ENCODE measurements at regions of chr7 and their contacts with region 1.

Region 1: GRCh38 chr7:112449902-112450806 is at the start of gene IFRD1:
- DNase-seq: peak; percentile 98
- H3K4me3 Mint-ChIP-seq: peak within 1 kb of the TSS; percentile 99
- H3K27ac Mint-ChIP-seq: peak within 1 kb of the TSS; percentile 99
- H3K4me1 Mint-ChIP-seq: peaks cover 39% of the 10 kb centered on the region
- H3K27me3 Mint-ChIP-seq: no peaks in the 10 kb centered on the region
- total RNA-seq, gene IFRD1: 47.3 to 50.5 TPM

Region 2: GRCh38 chr7:111561885-111562732 is 888.0 kb before region 1 on chr7 and contains the start of gene IMMP2L:
- CTCF ChIA-PET with region 1: no interaction called
- intact Hi-C with region 1: loop called (anchors 1 kb)
- DNase-seq: peak; percentile 89
- H3K4me3 Mint-ChIP-seq: peak within 1 kb of the TSS; percentile 89
- H3K27ac Mint-ChIP-seq: peak within 1 kb of the TSS; percentile 85
- H3K4me1 Mint-ChIP-seq: peaks cover 32% of the 10 kb centered on the region
- H3K27me3 Mint-ChIP-seq: no peaks in the 10 kb centered on the region
- total RNA-seq, gene IMMP2L: 24.4 to 26.6 TPM

Region 3: DNA sequence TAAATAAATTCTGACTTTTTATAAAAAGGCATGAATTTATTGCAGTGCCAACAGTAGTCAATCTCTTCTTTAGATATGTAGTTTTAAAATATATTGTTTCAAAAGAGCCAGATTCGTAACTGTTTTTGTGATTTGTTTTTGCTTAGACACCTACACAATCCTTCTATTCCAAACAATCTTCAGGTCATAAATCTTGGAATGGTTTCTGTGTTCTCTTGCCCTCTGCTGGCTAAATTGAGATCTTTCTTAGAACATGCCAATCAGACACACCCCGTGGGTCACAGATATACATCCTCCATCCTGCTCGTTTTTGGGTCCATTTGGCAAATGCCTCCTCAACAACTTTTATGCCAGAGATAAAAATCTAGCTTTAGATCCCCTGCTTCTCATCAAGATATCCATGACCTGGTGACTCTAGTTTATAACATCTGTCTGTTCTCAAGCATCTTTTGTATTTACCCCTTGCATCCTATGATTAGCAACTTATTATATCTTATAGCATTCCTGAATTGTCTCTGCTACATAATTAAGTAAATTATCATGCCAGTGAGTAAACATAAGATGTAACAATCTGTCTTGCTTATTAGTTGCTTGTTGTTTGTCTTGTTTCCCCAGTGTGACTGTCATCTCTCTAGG is 35.2 kb before region 1 on chr7:
- CTCF ChIA-PET with region 1: no interaction called
- intact Hi-C with region 1: loop called (anchors 2 kb)
- DNase-seq: no peak
- H3K4me3 Mint-ChIP-seq: no peak overlapping the region
- H3K27ac Mint-ChIP-seq: no peak overlapping the region
- H3K4me1 Mint-ChIP-seq: no peaks in the 10 kb centered on the region
- H3K27me3 Mint-ChIP-seq: peaks cover 10% of the 10 kb centered on the region

Region 4: DNA sequence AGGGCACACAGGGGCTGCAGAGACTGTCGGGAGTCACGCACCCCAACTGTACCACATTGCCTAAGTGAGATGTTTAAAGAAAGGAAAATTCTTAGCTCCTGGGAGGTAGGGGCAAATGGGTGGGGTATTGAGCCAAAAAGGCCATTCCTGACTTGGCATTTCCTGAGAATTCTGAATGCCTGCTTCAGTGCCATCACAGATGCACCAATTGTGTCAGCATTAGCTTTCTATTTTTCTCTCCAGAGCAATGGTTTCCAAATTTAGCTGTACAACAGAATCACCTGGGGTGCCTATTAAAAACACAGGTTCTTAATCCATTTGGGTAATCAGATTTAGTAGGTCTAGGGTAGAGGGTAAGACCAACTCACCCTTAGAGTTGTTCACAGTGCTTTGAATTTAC is 73.7 kb after region 1 on chr7:
- CTCF ChIA-PET with region 1: no interaction called
- intact Hi-C with region 1: no loop called
- DNase-seq: no peak
- H3K4me3 Mint-ChIP-seq: no peak overlapping the region
- H3K27ac Mint-ChIP-seq: no peak overlapping the region
- H3K4me1 Mint-ChIP-seq: no peaks in the 10 kb centered on the region
- H3K27me3 Mint-ChIP-seq: peaks cover 25% of the 10 kb centered on the region

Region 5: DNA sequence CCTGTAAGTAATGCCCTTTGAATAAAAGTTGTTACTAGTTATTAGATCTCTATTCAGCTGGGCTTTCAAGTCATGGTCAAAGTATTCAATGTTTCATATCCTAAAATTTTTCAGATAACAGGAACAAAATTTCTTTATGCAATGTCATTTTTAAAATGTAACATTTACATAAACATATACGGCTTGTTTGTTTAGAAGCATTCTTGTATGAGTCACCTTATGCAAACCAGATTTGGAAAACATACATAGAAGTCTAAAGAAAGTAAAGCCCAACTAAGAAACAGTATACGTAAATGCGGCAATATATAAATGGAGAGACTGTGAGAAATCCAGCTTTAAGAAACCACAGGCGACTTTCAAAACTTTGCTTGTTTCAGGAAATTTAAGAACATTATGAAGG is 329.5 kb after region 1 on chr7:
- CTCF ChIA-PET with region 1: no interaction called
- intact Hi-C with region 1: no loop called
- DNase-seq: no peak
- H3K4me3 Mint-ChIP-seq: no peak overlapping the region
- H3K27ac Mint-ChIP-seq: no peak overlapping the region
- H3K4me1 Mint-ChIP-seq: peaks cover 19% of the 10 kb centered on the region
- H3K27me3 Mint-ChIP-seq: no peaks in the 10 kb centered on the region

Region 6: DNA sequence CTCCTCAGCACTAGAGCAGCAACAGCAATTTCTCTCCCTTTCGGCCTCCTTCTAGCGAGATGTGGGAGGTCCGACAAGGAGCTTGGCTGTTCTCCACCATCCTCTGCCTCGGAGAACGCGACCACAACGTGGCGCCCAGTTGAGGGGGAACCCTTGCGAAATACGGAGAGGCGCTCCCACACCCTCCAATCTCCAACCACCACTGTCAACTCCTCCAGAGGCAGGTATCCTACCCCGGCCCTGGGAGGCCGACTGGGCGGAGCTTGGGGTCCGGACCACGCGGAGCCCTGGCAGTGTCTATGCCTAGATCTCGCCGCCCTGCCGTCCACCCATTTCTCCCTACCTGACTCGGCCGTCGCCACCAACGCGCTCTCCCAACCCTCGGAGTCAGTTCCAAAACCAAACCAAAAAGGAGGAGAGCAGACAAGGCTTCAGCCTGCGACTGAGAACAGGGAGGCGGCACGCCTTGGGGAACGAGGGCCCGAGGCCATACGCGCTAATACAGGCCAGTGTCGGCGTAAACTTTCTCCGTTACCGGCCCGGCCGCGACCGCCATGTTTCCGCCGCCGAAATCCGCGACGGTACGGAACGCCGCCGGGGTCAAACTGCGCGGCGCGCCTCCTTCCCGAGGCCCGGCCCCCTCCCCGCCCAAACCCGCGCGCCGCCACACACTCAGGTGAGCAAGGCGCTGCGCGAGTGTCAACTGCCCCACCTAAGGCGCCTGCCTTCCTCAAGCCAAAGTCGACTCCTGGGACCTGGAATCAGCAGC is 339.8 kb after region 1 on chr7 and contains the start of gene TMEM168:
- CTCF ChIA-PET with region 1: no interaction called
- intact Hi-C with region 1: loop called (anchors 1 kb)
- DNase-seq: peak; percentile 90
- H3K4me3 Mint-ChIP-seq: peak within 1 kb of the TSS; percentile 93
- H3K27ac Mint-ChIP-seq: peak within 1 kb of the TSS; percentile 85
- H3K4me1 Mint-ChIP-seq: peaks cover 43% of the 10 kb centered on the region
- H3K27me3 Mint-ChIP-seq: no peaks in the 10 kb centered on the region
- total RNA-seq, gene TMEM168: 18.6 to 20.4 TPM

Region 7: GRCh38 chr7:113118074-113118959 is 668.2 kb after region 1 on chr7 and contains the start of gene SMIM30:
- CTCF ChIA-PET with region 1: no interaction called
- intact Hi-C with region 1: loop called (anchors 1 kb)
- DNase-seq: peak; percentile 92
- H3K4me3 Mint-ChIP-seq: peak within 1 kb of the TSS; percentile 85
- H3K27ac Mint-ChIP-seq: peak within 1 kb of the TSS; percentile 79
- H3K4me1 Mint-ChIP-seq: peaks cover 28% of the 10 kb centered on the region
- H3K27me3 Mint-ChIP-seq: no peaks in the 10 kb centered on the region
- total RNA-seq, gene SMIM30: 40.1 to 41.2 TPM

Measured in activated naive CD4-positive, alpha-beta T cell treated with anti-CD3 and anti-CD28 coated beads for 36 hours (primary cell).